CD8-positive, alpha-beta T cell (primary cell): ENCODE measurements at regions of chr17 and their contacts with region 1.

Region 1: GRCh38 chr17:7856883-7857723 is at the start of gene NAA38:
- DNase-seq: peak; percentile 87 to 99 (median 95)
- ATAC-seq: peak; percentile 81
- H3K4me3 ChIP-seq: peak within 1 kb of the TSS; percentile 88 to 98
- H3K4me3 Mint-ChIP-seq: no peak within 1 kb of the TSS
- H3K27ac ChIP-seq: peak within 1 kb of the TSS; percentile 93 to 94
- H3K27ac Mint-ChIP-seq: no peak within 1 kb of the TSS
- H3K4me1 ChIP-seq: peaks cover 28% of the 10 kb centered on the region
- H3K4me1 Mint-ChIP-seq: peaks cover 5% of the 10 kb centered on the region
- H3K27me3 ChIP-seq: no peaks in the 10 kb centered on the region
- H3K27me3 Mint-ChIP-seq: no peaks in the 10 kb centered on the region
- CTCF ChIP-seq: no peak
- total RNA-seq, gene NAA38: 14.3 to 16.5 TPM

Region 2: GRCh38 chr17:7794075-7794663 is 62.9 kb before region 1 on chr17:
- CTCF ChIA-PET with region 1: no interaction called
- POLR2A ChIA-PET with region 1: no interaction called
- intact Hi-C with region 1: no loop called
- DNase-seq: no peak
- ATAC-seq: no peak
- H3K4me3 ChIP-seq: no peak overlapping the region
- H3K4me3 Mint-ChIP-seq: no peak overlapping the region
- H3K27ac ChIP-seq: no peak overlapping the region
- H3K27ac Mint-ChIP-seq: no peak overlapping the region
- H3K4me1 ChIP-seq: no peaks in the 10 kb centered on the region
- H3K4me1 Mint-ChIP-seq: no peaks in the 10 kb centered on the region
- H3K27me3 ChIP-seq: peaks cover 0 to 3% of the 10 kb centered on the region in 2 experiments
- H3K27me3 Mint-ChIP-seq: peaks cover 11% of the 10 kb centered on the region
- CTCF ChIP-seq: no peak

Region 3: DNA sequence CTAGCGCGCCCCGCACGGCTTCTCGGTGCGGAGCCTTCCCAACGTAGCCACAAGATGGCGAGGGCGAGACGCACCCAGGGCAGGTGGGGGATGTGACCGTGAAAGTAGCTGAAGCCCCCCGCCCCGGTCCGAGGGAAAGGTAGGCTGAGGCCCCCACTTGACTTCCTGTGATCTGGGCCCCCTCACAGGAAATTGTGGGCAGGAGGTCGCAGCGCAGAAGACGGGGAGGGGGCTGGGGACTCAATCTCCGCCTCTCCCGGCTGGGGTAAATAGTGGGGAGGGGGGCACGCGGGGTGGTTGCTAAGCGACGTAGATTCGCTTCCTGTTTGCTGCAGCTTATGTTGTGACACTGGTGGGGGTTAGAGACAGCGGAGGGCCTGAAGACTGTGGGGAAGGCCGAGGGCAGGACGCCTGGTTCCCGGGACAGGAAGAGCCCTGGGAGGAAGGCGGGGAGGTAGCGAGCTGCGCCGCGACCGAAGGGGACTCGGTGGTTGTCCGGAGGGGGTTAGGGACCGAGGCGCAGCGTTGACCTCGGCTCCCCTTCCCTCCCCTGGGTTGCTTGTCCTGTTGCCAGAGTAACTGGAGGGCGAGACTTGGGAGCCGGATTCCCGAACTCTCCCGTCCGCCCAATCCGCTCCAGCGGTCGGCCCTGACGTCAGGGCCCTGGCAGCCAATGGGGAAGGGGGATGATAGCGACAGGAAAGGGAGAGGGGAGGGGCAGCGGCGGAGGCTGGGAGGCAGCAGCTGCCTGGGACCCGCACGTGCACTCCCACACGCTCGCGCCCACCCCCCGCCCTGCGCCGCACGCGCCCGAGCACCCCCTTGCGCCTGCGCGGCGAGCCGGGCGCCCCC is 21.9 kb before region 1 on chr17:
- CTCF ChIA-PET with region 1: interaction called, 57 read pairs
- POLR2A ChIA-PET with region 1: interaction called, 37 read pairs
- intact Hi-C with region 1: loop called (anchors 1 kb)
- DNase-seq: peak; percentile 75 to 98 (median 85)
- ATAC-seq: peak; percentile 54
- H3K4me3 ChIP-seq: peak overlapping the region; percentile 90 to 97
- H3K4me3 Mint-ChIP-seq: peak overlapping the region; percentile 96
- H3K27ac ChIP-seq: peak overlapping the region; percentile 99
- H3K27ac Mint-ChIP-seq: peak overlapping the region; percentile 99
- H3K4me1 ChIP-seq: peaks cover 45% of the 10 kb centered on the region
- H3K4me1 Mint-ChIP-seq: peaks cover 45% of the 10 kb centered on the region
- H3K27me3 ChIP-seq: no peaks in the 10 kb centered on the region
- H3K27me3 Mint-ChIP-seq: no peaks in the 10 kb centered on the region
- CTCF ChIP-seq: peak; percentile 69

Region 4: DNA sequence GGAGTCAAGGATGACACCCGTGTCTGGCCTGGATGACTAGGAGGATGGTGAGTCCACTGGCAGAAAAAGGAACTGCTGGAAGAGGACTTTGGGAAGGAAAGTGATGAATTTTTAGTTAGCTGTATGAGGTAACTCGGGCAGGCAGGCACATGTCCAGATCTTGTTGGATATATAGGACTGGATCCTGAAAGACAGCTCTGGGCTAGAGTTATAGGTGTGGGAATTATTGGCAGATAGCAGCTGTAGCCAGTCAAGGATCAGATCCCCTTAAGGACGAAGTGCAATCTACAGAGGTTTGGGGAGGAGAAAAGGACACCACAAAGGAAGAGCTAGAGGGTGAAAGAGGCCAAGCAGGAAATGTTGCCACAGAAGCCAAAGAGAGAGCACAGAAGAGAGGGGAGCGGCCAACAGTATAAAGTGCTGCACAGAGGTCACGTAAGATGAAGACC is 10.8 kb after region 1 on chr17:
- CTCF ChIA-PET with region 1: interaction called, 17 read pairs
- POLR2A ChIA-PET with region 1: interaction called, 10 read pairs
- intact Hi-C with region 1: no loop called
- DNase-seq: peak in 1 of 9 experiments; percentile 53
- ATAC-seq: peak; percentile 67
- H3K4me3 ChIP-seq: peak overlapping the region; percentile 21 to 22
- H3K4me3 Mint-ChIP-seq: peak overlapping the region; percentile 50
- H3K27ac ChIP-seq: peak overlapping the region in 1 of 2 experiments; percentile 65
- H3K27ac Mint-ChIP-seq: peak overlapping the region; percentile 80
- H3K4me1 ChIP-seq: peaks cover 26% of the 10 kb centered on the region
- H3K4me1 Mint-ChIP-seq: peaks cover 31% of the 10 kb centered on the region
- H3K27me3 ChIP-seq: no peaks in the 10 kb centered on the region
- H3K27me3 Mint-ChIP-seq: no peaks in the 10 kb centered on the region
- CTCF ChIP-seq: no peak

Region 5: GRCh38 chr17:7897773-7898172 is 40.7 kb after region 1 on chr17:
- CTCF ChIA-PET with region 1: interaction called, 57 read pairs
- POLR2A ChIA-PET with region 1: interaction called, 4 read pairs
- intact Hi-C with region 1: no loop called
- DNase-seq: peak in 3 of 9 experiments; percentile 39 to 61 (median 44)
- ATAC-seq: peak; percentile 81
- H3K4me3 ChIP-seq: no peak overlapping the region
- H3K4me3 Mint-ChIP-seq: no peak overlapping the region
- H3K27ac ChIP-seq: no peak overlapping the region
- H3K27ac Mint-ChIP-seq: peak overlapping the region; percentile 75
- H3K4me1 ChIP-seq: no peaks in the 10 kb centered on the region
- H3K4me1 Mint-ChIP-seq: peaks cover 9% of the 10 kb centered on the region
- H3K27me3 ChIP-seq: no peaks in the 10 kb centered on the region
- H3K27me3 Mint-ChIP-seq: no peaks in the 10 kb centered on the region
- CTCF ChIP-seq: peak; percentile 36

Region 6: DNA sequence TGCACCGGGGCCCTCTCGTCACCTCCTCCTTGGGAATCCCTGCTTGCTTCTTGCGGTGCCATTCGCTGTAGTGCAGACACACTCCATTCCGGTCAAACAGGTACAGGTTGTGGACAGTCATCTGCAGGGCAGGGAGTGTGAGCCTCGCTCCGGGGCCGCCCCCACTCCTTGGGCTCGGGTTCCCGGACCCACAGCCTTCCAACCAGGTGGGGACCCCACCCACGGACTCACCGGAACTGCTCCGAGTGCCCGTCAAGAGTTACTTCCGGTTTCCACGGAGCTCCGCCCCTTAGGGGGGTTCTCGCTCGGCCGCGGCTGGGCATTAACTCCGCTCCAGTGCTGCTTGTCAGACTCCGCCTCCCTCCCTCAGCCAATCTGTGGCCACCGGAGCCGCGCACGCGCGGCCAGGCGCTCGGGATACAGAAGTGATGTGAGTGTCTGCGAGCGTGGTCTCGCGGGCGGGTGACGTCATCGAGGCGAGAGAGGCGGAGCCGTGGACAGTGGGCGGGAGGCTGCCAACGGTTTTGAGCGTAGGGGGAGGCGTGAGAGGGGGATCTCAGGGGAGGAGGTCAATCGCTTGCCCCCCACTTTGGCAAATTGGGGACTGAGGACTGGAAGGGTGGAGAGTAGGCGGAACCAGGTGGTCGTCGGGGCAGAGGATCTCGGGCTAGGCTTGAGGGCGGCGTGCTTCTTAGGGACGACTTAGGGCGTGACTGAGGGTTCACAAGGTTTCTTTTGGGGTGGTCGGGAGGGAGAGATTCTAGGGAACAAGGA is 74.8 kb after region 1 on chr17 and contains the starts of genes CNTROB and TRAPPC1:
- CTCF ChIA-PET with region 1: interaction called, 4 read pairs
- POLR2A ChIA-PET with region 1: interaction called, 6 read pairs
- intact Hi-C with region 1: loop called (anchors 1 kb)
- DNase-seq: peak; percentile 99 to 100 (median 99)
- ATAC-seq: peak; percentile 93
- H3K4me3 ChIP-seq: peak within 1 kb of the TSS; percentile 96
- H3K4me3 Mint-ChIP-seq: peak within 1 kb of the TSS; percentile 100
- H3K27ac ChIP-seq: peak within 1 kb of the TSS; percentile 85
- H3K27ac Mint-ChIP-seq: peak within 1 kb of the TSS; percentile 99
- H3K4me1 ChIP-seq: peaks cover 22% of the 10 kb centered on the region
- H3K4me1 Mint-ChIP-seq: peaks cover 50% of the 10 kb centered on the region
- H3K27me3 ChIP-seq: no peaks in the 10 kb centered on the region
- H3K27me3 Mint-ChIP-seq: no peaks in the 10 kb centered on the region
- CTCF ChIP-seq: no peak
- total RNA-seq, gene CNTROB: 20.1 to 23.6 TPM
- total RNA-seq, gene TRAPPC1: 29.6 to 39.4 TPM

Region 7: GRCh38 chr17:8156246-8156992 is 299.3 kb after region 1 on chr17:
- CTCF ChIA-PET with region 1: no interaction called
- POLR2A ChIA-PET with region 1: no interaction called
- intact Hi-C with region 1: loop called in 1 of 2 experiments (anchors 1 kb)
- DNase-seq: peak; percentile 100
- ATAC-seq: peak; percentile 68
- H3K4me3 ChIP-seq: peak overlapping the region; percentile 82 to 90
- H3K4me3 Mint-ChIP-seq: no peak overlapping the region
- H3K27ac ChIP-seq: peak overlapping the region; percentile 100
- H3K27ac Mint-ChIP-seq: no peak overlapping the region
- H3K4me1 ChIP-seq: peaks cover 77% of the 10 kb centered on the region
- H3K4me1 Mint-ChIP-seq: peaks cover 68% of the 10 kb centered on the region
- H3K27me3 ChIP-seq: no peaks in the 10 kb centered on the region
- H3K27me3 Mint-ChIP-seq: no peaks in the 10 kb centered on the region
- CTCF ChIP-seq: no peak